OCI-LY7 (cell line): ENCODE measurements at regions of chr14 and their contacts with region 1.

Region 1: DNA sequence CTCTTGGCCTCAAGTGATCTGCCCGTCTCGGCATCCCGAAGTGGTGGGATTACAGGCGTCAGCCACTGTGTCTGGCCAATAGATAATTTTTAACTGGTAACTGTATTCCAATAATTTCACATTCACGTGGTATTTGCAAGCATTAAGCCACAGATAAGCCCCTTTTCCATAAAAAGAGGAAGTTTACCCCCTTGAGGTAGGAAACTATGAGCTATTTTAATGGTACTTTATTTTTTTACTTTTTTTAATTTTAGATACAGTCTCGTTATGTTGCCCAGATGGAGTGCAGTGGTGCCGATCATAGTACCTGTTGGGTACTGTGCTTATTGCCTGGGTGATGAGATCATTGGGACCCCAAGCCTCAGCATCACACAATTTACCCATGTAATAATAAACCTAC is 42.9 kb upstream of the AP4S1 start:
- DNase-seq: peak; percentile 56
- H3K4me3 ChIP-seq: peak overlapping the region; percentile 41
- H3K27ac ChIP-seq: peak overlapping the region; percentile 64
- H3K4me1 ChIP-seq: peaks cover 45% of the 10 kb centered on the region
- CTCF ChIP-seq: no peak

Region 2: DNA sequence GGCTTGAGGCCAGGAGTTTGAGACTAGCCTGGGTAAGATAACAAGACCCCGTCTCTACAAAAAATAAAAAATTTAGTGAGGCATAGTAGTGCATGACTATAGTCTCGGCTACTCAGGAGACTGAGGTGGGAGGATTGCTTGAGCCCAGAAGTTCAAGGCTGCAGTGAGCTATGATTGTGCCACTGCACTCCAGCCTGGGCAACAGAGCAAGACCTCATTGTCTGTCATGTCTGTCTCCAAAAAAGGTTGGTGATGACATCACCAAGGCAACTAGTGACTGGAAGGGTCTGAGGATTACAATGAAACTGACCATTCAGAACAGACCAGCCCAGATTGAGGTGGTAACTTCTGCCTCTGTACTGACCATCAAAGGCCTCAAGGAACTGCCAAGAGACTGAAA is 191.7 kb before region 1 on chr14:
- CTCF ChIA-PET with region 1: no interaction called
- POLR2A ChIA-PET with region 1: no interaction called
- intact Hi-C with region 1: no loop called
- DNase-seq: no peak
- H3K4me3 ChIP-seq: no peak overlapping the region
- H3K27ac ChIP-seq: no peak overlapping the region
- H3K4me1 ChIP-seq: no peaks in the 10 kb centered on the region
- CTCF ChIP-seq: no peak

Region 3: DNA sequence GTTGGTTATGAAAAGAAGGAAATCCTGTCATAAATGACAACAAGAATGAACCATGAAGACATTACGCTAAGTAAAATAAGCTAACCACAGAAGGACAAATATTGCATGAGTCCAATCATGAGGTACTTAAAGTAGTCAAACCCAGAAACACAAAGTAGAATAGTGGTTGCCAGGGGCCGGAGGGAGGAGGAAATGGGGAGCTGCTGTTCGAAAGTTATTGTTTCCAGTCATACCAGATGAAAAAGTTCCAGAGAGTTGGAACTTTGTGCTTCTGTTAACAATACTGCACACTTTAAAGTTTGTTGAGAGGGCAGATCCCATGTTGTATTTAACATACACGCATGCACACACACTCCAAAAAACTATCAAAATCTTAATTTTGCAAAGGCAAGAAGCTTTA is 38.8 kb before region 1 on chr14:
- CTCF ChIA-PET with region 1: no interaction called
- POLR2A ChIA-PET with region 1: no interaction called
- intact Hi-C with region 1: no loop called
- DNase-seq: no peak
- H3K4me3 ChIP-seq: no peak overlapping the region
- H3K27ac ChIP-seq: no peak overlapping the region
- H3K4me1 ChIP-seq: no peaks in the 10 kb centered on the region
- CTCF ChIP-seq: no peak

Region 4: DNA sequence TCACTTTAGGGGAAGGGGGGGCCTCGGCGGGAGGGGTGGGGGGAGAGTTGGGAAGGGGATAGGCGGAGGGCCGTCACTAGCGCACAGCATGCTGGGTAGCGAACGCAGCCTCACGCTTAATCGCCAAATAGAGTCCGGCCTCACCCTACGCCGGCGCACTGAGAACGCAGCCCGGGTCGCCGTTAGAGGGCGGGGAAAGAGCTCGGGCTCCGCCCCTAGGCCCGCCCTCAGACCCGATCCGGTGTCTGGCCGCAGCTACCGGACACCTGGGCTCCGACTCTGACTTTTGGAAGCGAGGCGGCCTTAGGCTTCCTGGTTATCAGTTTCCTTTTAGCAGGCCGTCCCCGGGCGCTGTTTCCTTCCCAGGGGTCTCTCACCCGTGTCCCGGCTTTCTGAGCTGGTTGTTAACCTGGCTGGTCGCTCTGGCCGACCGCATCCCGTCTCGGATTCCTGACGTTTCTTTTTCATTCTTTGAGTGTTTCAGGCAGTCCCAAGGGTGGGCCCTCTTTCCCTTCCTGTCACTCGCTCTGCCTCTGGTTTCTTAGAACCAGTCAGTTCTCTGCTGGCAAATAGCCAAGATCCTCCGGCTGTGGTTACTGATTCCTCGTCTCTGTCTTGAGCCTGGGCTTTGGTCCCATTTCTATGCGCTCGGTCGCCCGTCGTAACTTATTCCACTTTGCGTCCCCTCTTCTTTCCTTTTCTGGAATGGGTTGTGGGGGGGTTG is 44.0 kb after region 1 on chr14:
- CTCF ChIA-PET with region 1: no interaction called
- POLR2A ChIA-PET with region 1: interaction called, 7 read pairs
- intact Hi-C with region 1: loop called (anchors 2 kb)
- DNase-seq: peak; percentile 95
- H3K4me3 ChIP-seq: peak overlapping the region; percentile 98
- H3K27ac ChIP-seq: peak overlapping the region; percentile 76
- H3K4me1 ChIP-seq: peaks cover 25% of the 10 kb centered on the region
- CTCF ChIP-seq: no peak

Region 5: GRCh38 chr14:31357279-31357678 is 374.7 kb after region 1 on chr14:
- CTCF ChIA-PET with region 1: no interaction called
- POLR2A ChIA-PET with region 1: no interaction called
- intact Hi-C with region 1: loop called (anchors 2 kb)
- DNase-seq: no peak
- H3K4me3 ChIP-seq: no peak overlapping the region
- H3K27ac ChIP-seq: no peak overlapping the region
- H3K4me1 ChIP-seq: peaks cover 22% of the 10 kb centered on the region
- CTCF ChIP-seq: no peak